ENCODE measurements at regions of chr17 and their contacts with region 1.

Region 1: DNA sequence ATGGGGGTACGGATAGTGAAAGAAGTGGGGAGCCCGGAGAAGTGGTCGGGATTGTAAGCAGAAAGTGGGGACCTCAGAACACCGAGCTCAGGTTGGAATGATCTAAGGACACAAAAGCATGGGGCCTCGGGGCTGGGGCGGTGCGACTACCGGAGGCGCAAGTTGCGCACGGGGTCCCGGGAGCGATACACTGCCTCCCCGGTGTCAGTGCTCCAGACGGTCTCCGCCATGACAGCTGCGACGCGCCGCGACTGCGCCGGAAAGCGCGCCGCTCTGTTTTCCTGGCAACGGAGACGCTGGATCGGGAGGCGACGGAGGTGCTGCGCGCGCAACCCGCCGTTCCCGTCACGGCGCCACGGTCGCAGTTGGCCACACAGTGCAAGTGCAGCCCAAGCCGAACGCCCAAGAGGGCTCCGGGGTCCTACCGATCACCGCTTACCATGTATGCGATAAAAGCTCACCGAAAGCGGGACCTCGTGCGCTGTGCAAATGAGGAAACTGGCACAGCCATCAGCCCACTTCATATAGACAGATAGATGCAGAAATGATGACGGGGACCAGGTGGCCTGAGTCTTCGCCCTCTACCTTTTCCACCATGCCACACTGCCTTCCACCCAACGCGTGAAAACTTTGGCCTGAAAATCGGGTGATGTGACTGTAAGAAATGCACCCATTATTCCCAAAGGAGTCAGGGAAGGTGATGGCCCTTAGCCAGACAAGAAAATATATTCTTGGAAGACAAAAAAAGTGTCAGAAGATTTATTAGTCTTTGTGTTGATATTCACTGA is at the start of gene MKS1:
- DNase-seq: peak; percentile 94 to 98
- H3K4me3 ChIP-seq: peak within 1 kb of the TSS; percentile 53
- H3K4me3 Mint-ChIP-seq: peak within 1 kb of the TSS; percentile 94
- H3K27ac Mint-ChIP-seq: peak within 1 kb of the TSS; percentile 97
- H3K4me1 ChIP-seq: no peaks in the 10 kb centered on the region
- H3K4me1 Mint-ChIP-seq: peaks cover 4% of the 10 kb centered on the region
- H3K27me3 ChIP-seq: no peaks in the 10 kb centered on the region
- H3K27me3 Mint-ChIP-seq: peaks cover 3% of the 10 kb centered on the region
- CTCF ChIP-seq: peak; percentile 60 to 71
- total RNA-seq, gene MKS1: 25.5 and 28.6 TPM in 2 replicates

Region 2: GRCh38 chr17:58200017-58200633 is 19.1 kb before region 1 on chr17:
- CTCF ChIA-PET with region 1: interaction called, 8 read pairs
- POLR2A ChIA-PET with region 1: interaction called, 3 read pairs
- intact Hi-C with region 1: loop called (anchors 1 kb)
- DNase-seq: peak; percentile 71 to 73
- H3K4me3 ChIP-seq: no peak overlapping the region
- H3K4me3 Mint-ChIP-seq: no peak overlapping the region
- H3K27ac Mint-ChIP-seq: no peak overlapping the region
- H3K4me1 ChIP-seq: no peaks in the 10 kb centered on the region
- H3K4me1 Mint-ChIP-seq: peaks cover 8% of the 10 kb centered on the region
- H3K27me3 ChIP-seq: no peaks in the 10 kb centered on the region
- H3K27me3 Mint-ChIP-seq: peaks cover 4% of the 10 kb centered on the region
- CTCF ChIP-seq: peak; percentile 51 to 53

Measured in Caco-2 (cell line).